A549 (cell line): ENCODE measurements at regions of chr17 and their contacts with region 1.

Region 1: GRCh38 chr17:36601303-36602029 is at the start of gene MRM1:
- DNase-seq: peak; percentile 89 to 96
- ATAC-seq: peak; percentile 81 to 92
- H3K4me3 ChIP-seq: peak within 1 kb of the TSS; percentile 66
- H3K27ac ChIP-seq: peak within 1 kb of the TSS; percentile 87 to 94
- H3K4me1 ChIP-seq: peaks cover 24% of the 10 kb centered on the region
- CTCF ChIP-seq: peak; percentile 33; the same call in 2 of the 3 replicates
- EP300 ChIP-seq: no peak
- POLR2A ChIP-seq: peak; percentile 97
- RAD21 ChIP-seq: no peak
- polyA plus RNA-seq, gene MRM1: 11.1 and 12.7 TPM in 2 replicates

Region 2: GRCh38 chr17:36534840-36535668 is 66.4 kb before region 1 on chr17 and contains the starts of genes MYO19 and PIGW:
- CTCF ChIA-PET with region 1: interaction called, 21 read pairs
- POLR2A ChIA-PET with region 1: interaction called, 13 read pairs
- DNase-seq: peak; percentile 91 to 96
- ATAC-seq: peak; percentile 88 to 93
- H3K4me3 ChIP-seq: peak within 1 kb of the TSS; percentile 67
- H3K27ac ChIP-seq: peak within 1 kb of the TSS; percentile 91 to 95
- H3K4me1 ChIP-seq: peaks cover 9% of the 10 kb centered on the region; the same call in 2 of the 3 replicates
- CTCF ChIP-seq: no peak
- EP300 ChIP-seq: no peak
- POLR2A ChIP-seq: peak; percentile 90
- RAD21 ChIP-seq: no peak
- polyA plus RNA-seq, gene MYO19: 99.0 and 124 TPM in 2 replicates
- polyA plus RNA-seq, gene PIGW: 26.1 and 30.0 TPM in 2 replicates

Region 3: DNA sequence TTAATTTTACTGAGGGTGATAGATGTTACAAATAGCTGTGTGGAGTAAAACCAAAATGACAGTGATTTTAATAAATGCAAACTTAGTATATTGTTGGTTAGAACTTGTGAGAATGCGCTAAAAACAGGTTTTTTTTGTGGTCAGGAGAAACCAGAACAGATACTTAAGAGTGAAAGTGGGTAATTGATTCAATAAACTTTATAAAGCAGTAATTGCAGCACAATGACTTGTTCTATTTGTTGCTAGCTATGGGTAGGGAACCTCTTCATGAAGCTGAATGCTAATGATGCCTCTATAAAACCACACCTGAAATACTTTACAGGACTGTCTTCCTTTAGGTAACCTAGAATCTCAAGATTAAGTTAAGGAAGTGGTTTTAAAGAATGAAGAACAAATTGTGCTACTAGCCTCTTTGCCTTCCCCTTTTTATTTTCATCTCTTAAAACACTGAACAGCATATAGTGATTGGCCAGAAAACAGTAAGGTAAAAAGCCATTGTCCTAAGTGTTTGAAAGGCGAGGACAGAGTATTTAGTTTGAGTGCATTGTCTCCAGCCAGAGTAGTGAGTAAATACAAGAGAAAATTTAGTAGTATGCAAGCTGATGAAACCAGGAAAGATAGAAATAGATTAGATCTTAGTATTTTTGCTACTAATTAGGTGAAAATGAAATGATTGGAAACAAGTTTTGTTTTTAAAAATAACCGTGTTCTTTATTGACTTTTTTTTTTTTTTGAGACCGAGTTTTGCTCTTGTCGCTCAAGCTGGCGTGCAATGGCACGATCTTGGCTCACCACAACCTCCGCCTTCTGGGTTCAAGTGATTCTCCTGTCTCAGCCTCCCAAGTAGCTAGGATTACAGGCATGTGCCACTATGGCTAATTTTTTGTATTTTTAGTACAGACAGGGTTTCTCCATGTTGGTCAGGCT is 50.7 kb before region 1 on chr17:
- CTCF ChIA-PET with region 1: interaction called, 23 read pairs
- POLR2A ChIA-PET with region 1: interaction called, 35 read pairs
- DNase-seq: no peak
- ATAC-seq: no peak
- H3K4me3 ChIP-seq: no peak overlapping the region
- H3K27ac ChIP-seq: no peak overlapping the region
- H3K4me1 ChIP-seq: peaks cover 22% of the 10 kb centered on the region
- CTCF ChIP-seq: no peak
- EP300 ChIP-seq: no peak
- POLR2A ChIP-seq: no peak
- RAD21 ChIP-seq: no peak

Region 4: GRCh38 chr17:36611345-36612072 is 10.0 kb after region 1 on chr17:
- CTCF ChIA-PET with region 1: interaction called, 96 read pairs
- POLR2A ChIA-PET with region 1: interaction called, 3 read pairs
- DNase-seq: peak in 1 of 2 experiments; percentile 61
- ATAC-seq: peak in 1 of 2 experiments; percentile 33; a peak in 2 of 6 replicates
- H3K4me3 ChIP-seq: no peak overlapping the region
- H3K27ac ChIP-seq: peak overlapping the region in 1 of 2 experiments; percentile 27; a peak in 1 of 6 replicates
- H3K4me1 ChIP-seq: peaks cover 23% of the 10 kb centered on the region
- CTCF ChIP-seq: no peak
- EP300 ChIP-seq: no peak
- POLR2A ChIP-seq: no peak
- RAD21 ChIP-seq: no peak

Region 5: DNA sequence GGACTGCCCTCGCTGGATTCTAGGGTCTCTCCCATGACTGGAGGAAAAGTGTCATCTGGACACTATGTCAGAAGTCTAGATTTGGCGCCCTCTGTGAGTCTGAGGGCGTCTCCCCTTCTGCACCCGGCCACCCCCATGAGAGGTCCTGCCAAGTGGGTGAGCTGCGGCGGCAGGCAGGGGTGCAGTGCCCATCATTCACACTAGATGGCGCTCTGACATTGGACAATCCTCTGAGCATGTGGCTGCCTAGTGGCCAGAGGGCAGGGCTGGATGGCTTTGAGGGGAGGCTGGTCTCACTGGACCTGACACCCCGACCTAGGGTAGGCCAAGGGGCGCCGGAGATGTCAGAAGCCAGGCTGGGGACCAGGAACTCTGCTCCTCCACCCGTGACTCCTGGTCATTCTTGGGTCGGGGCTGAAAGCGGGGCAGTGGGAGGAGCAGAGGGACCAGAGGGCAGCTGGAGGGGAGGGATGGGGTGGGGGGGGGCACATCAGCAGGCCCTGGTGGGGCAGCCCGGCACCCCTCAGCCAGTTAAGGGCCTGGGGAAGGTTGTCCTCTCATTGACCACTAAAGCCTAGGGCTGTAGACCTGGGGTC is 27.9 kb after region 1 on chr17:
- CTCF ChIA-PET with region 1: interaction called, 69 read pairs
- POLR2A ChIA-PET with region 1: no interaction called
- DNase-seq: peak; percentile 81 to 90
- ATAC-seq: peak; percentile 87 to 95
- H3K4me3 ChIP-seq: no peak overlapping the region
- H3K27ac ChIP-seq: 0 out of 6 replicates have a peak overlapping the region, but pooled peaks of 1 of the 2 experiments have one; percentile 26
- H3K4me1 ChIP-seq: no peaks in the 10 kb centered on the region
- CTCF ChIP-seq: peak; percentile 96
- EP300 ChIP-seq: no peak
- POLR2A ChIP-seq: no peak
- RAD21 ChIP-seq: peak; percentile 98 to 99

Region 6: GRCh38 chr17:37239690-37240334 is 638.3 kb after region 1 on chr17:
- CTCF ChIA-PET with region 1: interaction called, 22 read pairs
- POLR2A ChIA-PET with region 1: interaction called, 5 read pairs
- DNase-seq: peak; percentile 21 to 38
- ATAC-seq: peak; percentile 57 to 64; a peak in 4 of 6 replicates
- H3K4me3 ChIP-seq: no peak overlapping the region
- H3K27ac ChIP-seq: no peak overlapping the region
- H3K4me1 ChIP-seq: 0 out of 3 replicates have a peak, but pooled peaks cover 6% of the 10 kb centered on the region
- CTCF ChIP-seq: peak; percentile 86
- EP300 ChIP-seq: no peak
- POLR2A ChIP-seq: no peak
- RAD21 ChIP-seq: peak; percentile 44 to 60